Calu3 (cell line): ENCODE measurements at regions of chr21 and their contacts with region 1.

Region 1: GRCh38 chr21:29091032-29091431 is 17.6 kb upstream of the CCT8 start:
- DNase-seq: no peak
- H3K4me3 Mint-ChIP-seq: no peak overlapping the region
- H3K27ac Mint-ChIP-seq: no peak overlapping the region
- H3K4me1 Mint-ChIP-seq: peaks cover 18% of the 10 kb centered on the region
- H3K27me3 Mint-ChIP-seq: no peaks in the 10 kb centered on the region
- CTCF ChIP-seq: no peak

Region 2: GRCh38 chr21:29155118-29155932 is 64.3 kb after region 1 on chr21:
- CTCF ChIA-PET with region 1: no interaction called
- intact Hi-C with region 1: loop called (anchors 5 kb)
- DNase-seq: peak; percentile 17
- H3K4me3 Mint-ChIP-seq: no peak overlapping the region
- H3K27ac Mint-ChIP-seq: no peak overlapping the region
- H3K4me1 Mint-ChIP-seq: peaks cover under 1% of the 10 kb centered on the region
- H3K27me3 Mint-ChIP-seq: no peaks in the 10 kb centered on the region
- CTCF ChIP-seq: no peak

Region 3: GRCh38 chr21:29299916-29300806 is 209.1 kb after region 1 on chr21:
- CTCF ChIA-PET with region 1: no interaction called
- intact Hi-C with region 1: loop called (anchors 5 kb)
- DNase-seq: peak; percentile 27
- H3K4me3 Mint-ChIP-seq: peak overlapping the region; percentile 94
- H3K27ac Mint-ChIP-seq: peak overlapping the region; percentile 92
- H3K4me1 Mint-ChIP-seq: peaks cover 16% of the 10 kb centered on the region
- H3K27me3 Mint-ChIP-seq: no peaks in the 10 kb centered on the region
- CTCF ChIP-seq: no peak

Region 4: GRCh38 chr21:29343519-29343918 is 252.5 kb after region 1 on chr21:
- CTCF ChIA-PET with region 1: interaction called, 3 read pairs
- intact Hi-C with region 1: loop called (anchors 5 kb)
- DNase-seq: no peak
- H3K4me3 Mint-ChIP-seq: no peak overlapping the region
- H3K27ac Mint-ChIP-seq: no peak overlapping the region
- H3K4me1 Mint-ChIP-seq: peaks cover 12% of the 10 kb centered on the region
- H3K27me3 Mint-ChIP-seq: no peaks in the 10 kb centered on the region
- CTCF ChIP-seq: no peak

Region 5: GRCh38 chr21:29372063-29372802 is 281.2 kb after region 1 on chr21:
- CTCF ChIA-PET with region 1: no interaction called
- intact Hi-C with region 1: loop called (anchors 1 kb)
- DNase-seq: peak; percentile 57
- H3K4me3 Mint-ChIP-seq: no peak overlapping the region
- H3K27ac Mint-ChIP-seq: no peak overlapping the region
- H3K4me1 Mint-ChIP-seq: no peaks in the 10 kb centered on the region
- H3K27me3 Mint-ChIP-seq: no peaks in the 10 kb centered on the region
- CTCF ChIP-seq: no peak

Region 6: DNA sequence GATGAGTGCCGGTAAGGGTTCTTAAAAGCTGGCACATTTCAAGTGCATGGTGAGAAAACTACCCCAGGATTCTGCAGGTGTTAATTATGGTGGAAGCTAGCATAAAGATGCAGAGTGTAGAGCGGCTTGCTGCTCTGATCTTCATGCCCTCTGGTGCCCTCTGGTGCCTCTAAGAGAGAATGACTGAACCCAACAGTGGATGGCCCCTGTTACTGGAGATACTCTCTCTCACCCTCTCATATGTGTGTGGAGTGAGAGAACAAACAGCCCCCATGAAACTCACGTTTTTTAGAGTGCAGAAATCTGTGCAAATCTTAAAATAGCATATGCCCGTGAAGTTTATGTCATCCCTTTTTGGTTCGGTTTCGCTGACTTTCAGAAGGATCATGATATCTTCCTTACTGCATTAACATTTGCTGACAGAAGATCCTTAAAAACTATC is 758.7 kb after region 1 on chr21:
- CTCF ChIA-PET with region 1: no interaction called
- intact Hi-C with region 1: loop called (anchors 5 kb)
- DNase-seq: peak; percentile 48
- H3K4me3 Mint-ChIP-seq: no peak overlapping the region
- H3K27ac Mint-ChIP-seq: no peak overlapping the region
- H3K4me1 Mint-ChIP-seq: no peaks in the 10 kb centered on the region
- H3K27me3 Mint-ChIP-seq: no peaks in the 10 kb centered on the region
- CTCF ChIP-seq: peak; percentile 60